ENCODE measurements at regions of chr17 and their contacts with region 1.

Region 1: GRCh38 chr17:75855310-75856081 is at the start of gene WBP2:
- DNase-seq: peak; percentile 99 to 100
- H3K4me3 ChIP-seq: peak within 1 kb of the TSS; percentile 56 to 87
- H3K27ac ChIP-seq: peak within 1 kb of the TSS; percentile 95 to 98
- H3K4me1 ChIP-seq: peaks cover 3 to 17% of the 10 kb centered on the region in 2 donors
- H3K27me3 ChIP-seq: no peaks in the 10 kb centered on the region
- CTCF ChIP-seq: peak; percentile 63 to 84 (median 68)
- total RNA-seq, gene WBP2: 50.7 TPM

Region 2: DNA sequence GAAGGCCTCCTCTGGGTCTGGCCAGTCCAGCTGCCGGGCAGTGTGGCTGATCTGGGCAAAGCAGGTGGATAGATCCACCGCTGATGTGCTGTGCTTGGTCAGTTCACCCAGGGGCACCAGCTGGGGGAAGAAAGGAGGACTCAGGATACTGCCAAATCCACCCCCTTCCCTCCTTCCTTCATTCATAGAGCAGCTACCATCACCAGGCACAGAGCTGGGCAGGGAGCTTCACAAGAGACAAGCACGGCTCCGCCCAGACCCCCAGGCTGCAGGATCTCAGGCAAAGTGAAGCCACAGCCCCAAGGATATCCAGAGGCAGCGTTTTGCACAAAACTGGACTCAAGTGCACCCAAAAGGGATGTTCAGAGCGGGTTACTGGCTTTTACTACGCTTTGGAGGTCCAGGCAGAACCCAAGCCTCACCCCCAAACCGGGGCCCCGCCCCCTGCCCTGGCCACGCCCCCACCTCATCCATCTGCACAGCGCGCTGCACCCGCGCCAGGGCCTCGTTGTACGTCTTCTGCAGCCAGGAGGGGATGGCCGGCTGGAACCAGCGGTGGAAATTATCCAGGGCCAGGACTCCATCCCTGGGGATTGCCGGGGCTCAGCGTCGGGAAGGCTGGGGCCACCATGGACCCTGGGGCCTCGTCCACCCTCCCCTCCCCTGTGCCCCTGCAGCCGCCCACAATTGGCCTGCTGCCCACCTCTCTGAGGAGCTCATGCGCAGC is 20.4 kb before region 1 on chr17:
- intact Hi-C with region 1: no loop called
- DNase-seq: no peak
- H3K4me3 ChIP-seq: no peak overlapping the region
- H3K27ac ChIP-seq: no peak overlapping the region
- H3K4me1 ChIP-seq: no peaks in the 10 kb centered on the region
- H3K27me3 ChIP-seq: no peaks in the 10 kb centered on the region
- CTCF ChIP-seq: no peak

Region 3: DNA sequence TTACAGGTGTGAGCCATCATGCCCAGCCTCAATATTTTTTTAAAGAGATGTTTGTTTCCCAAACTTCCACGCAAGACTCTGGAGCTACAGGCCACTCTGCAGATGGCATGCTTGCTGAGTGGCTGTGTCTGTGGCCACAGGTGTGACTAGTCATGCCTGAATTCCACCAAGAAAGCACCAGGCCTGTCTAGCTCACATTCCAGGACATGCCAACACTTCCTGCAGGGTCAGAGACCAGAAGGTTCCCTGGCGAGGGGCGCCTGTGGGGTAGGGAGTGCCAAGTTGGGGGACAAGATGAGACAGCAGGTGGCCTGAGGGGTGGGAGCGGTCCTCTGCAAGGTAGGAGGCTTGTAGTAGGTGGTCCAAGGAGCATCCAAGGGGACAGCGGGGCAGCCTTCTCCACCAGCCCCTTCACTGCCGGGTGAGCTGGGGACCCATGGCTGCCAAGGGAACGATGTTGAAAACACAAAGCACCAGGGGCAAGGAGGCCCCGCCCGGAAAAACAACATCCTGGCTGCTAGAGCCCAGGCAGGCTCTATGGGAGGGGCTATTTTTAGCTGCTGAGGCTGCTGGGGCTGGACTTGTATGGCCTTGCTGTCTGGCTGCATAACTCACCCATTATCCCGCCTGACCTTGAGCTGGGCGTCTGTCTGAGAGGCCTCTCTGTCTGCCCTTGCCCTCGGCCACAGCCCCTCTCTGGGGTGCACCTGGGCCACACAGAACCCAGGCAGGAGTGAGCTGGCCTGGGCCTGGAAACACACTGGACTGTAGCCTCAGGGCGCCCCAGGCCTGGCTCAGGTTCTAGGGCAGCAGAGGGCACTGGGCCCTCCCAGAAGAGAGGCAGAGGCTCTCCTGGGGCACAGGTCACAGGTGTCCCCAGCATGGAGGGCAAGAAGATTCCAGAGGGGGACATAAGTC is 17.2 kb after region 1 on chr17:
- intact Hi-C with region 1: loop called (anchors 1 kb)
- DNase-seq: peak; percentile 69 to 96
- H3K4me3 ChIP-seq: peak overlapping the region; percentile 14 to 85
- H3K27ac ChIP-seq: peak overlapping the region; percentile 96 to 99
- H3K4me1 ChIP-seq: peaks cover 52 to 77% of the 10 kb centered on the region in 2 donors
- H3K27me3 ChIP-seq: no peaks in the 10 kb centered on the region
- CTCF ChIP-seq: no peak

Region 4: DNA sequence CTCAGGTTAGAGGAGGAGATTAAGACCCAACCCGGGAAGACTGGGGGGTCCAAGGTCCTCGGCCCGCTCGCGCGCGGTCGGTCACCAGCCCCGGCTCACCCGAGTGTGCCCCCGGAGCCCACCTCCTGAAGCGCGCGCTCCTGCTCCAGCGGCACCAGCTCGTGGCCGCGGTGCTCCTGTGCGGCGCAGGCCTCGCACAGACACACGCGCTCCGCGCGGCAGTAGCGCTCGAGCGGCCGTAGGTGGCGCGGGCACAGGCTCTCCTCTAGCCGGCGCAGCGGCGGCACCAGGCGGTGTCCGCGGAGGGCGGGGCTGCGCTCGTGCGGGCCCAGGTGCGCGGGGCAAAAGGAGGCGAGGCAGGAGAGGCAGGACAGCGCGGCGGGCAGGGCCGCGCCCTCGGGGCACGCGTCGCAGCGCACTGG is 22.3 kb after region 1 on chr17:
- intact Hi-C with region 1: loop called (anchors 1 kb)
- DNase-seq: peak in 1 of 2 donors; percentile 86
- H3K4me3 ChIP-seq: peak overlapping the region; percentile 85 to 96
- H3K27ac ChIP-seq: peak overlapping the region; percentile 96 to 99
- H3K4me1 ChIP-seq: peaks cover 33 to 45% of the 10 kb centered on the region in 2 donors
- H3K27me3 ChIP-seq: no peaks in the 10 kb centered on the region
- CTCF ChIP-seq: peak in 2 of 3 experiments; percentile 48 to 51

Region 5: DNA sequence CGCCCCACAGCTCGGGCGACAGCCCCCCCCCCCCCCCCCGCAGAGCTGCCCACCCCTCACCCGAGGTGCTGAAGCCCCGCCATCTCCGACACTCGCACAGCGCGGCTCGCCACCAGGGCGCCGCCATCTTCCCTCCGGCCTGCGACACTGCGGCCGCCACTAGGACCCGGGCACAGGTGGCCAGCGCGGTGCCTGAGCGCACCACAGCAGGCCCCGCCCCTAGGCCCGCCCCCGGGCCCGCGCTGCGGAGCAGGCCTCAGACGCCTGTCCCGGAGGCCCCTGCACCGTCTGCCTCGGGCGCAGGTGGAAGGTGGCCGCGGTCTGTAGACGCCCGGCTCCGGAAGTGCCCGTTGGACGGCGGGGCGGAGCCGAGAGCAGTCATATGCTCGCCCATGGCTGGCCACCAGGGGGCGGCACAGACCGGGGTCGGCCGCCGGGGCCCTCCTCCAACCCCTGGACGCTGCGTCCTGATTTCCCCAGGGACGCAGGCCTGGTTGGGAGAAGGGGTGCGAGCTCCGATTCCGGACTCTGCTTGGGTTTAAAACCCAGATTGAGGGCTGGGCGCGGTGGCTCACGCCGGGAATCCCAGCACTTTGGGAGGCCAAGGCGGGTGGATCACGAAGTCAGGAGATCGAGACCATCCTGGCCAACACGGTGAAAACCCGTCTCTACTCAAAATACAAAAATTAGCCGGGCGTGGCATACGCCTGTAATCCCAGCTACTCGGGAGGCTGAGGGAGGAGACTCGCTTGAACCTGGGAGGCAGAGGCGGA is 49.4 kb after region 1 on chr17 and contains the start of gene MRPL38:
- intact Hi-C with region 1: no loop called
- DNase-seq: peak; percentile 73 to 96
- H3K4me3 ChIP-seq: peak within 1 kb of the TSS; percentile 74 to 79
- H3K27ac ChIP-seq: peak within 1 kb of the TSS; percentile 85 to 94
- H3K4me1 ChIP-seq: peaks cover 5 to 6% of the 10 kb centered on the region in 2 donors
- H3K27me3 ChIP-seq: no peaks in the 10 kb centered on the region
- CTCF ChIP-seq: peak; percentile 98 to 100 (median 99)
- total RNA-seq, gene MRPL38: 31.9 TPM

Region 6: GRCh38 chr17:75970011-75970523 is 114.6 kb after region 1 on chr17:
- intact Hi-C with region 1: no loop called
- DNase-seq: no peak
- H3K4me3 ChIP-seq: no peak overlapping the region
- H3K27ac ChIP-seq: no peak overlapping the region
- H3K4me1 ChIP-seq: no peaks in the 10 kb centered on the region
- H3K27me3 ChIP-seq: no peaks in the 10 kb centered on the region
- CTCF ChIP-seq: no peak